ENCODE measurements at regions of chr2 and their contacts with region 1.

Region 1: DNA sequence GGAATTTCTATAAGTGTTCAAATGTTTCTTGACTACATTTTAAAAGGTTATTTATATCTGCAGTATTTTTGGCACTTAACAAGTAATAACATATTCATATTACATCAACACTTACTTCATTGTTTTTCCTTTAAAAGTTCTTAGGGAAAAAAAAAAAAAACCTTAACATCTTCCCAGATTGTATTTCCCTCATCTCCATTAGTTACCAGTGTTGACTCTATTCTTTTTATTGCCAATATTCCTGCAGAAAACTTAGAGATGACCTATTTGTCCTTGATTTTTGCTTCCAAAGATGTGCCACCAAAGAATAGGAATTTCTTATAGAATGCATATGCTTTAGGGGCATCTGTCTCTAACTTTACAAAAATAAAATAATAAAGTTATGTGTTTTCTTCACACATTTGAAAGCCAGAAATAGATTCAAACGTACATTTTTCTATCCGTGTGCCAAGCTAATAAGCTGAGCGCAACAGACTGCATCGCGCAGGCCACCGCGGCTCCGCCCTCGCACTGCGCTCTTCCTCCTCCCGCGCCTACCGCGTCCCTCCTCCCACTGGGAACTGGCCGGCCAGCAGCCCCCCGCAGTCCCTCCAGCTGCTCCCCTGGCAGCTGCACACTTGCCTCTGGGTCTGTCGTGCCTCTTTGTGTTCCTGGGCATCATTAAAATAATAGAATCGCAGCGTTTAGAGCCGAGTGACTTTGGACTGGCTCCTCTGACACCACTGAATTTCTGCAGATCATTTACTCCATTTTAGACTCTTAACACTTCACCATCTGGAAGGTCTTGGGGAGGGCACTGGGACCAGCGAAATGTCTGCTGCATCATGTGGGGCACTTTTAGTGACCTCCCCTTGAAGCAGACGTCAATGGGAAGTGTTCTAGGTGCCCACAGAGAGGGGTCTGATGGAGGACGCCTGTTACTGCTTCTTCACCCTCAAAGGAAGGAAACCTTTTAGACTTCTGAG is 21.2 kb upstream of the NAB1 start:
- DNase-seq: no peak
- ATAC-seq: peak; percentile 70
- H3K4me3 Mint-ChIP-seq: peak overlapping the region; percentile 87
- H3K27ac Mint-ChIP-seq: peak overlapping the region; percentile 42
- H3K4me1 Mint-ChIP-seq: peaks cover 8% of the 10 kb centered on the region
- H3K27me3 Mint-ChIP-seq: peaks cover 6% of the 10 kb centered on the region
- CTCF ChIP-seq: no peak

Region 2: GRCh38 chr2:190545555-190546385 is 82.0 kb before region 1 on chr2:
- CTCF ChIA-PET with region 1: no interaction called
- POLR2A ChIA-PET with region 1: no interaction called
- intact Hi-C with region 1: loop called (anchors 5 kb)
- DNase-seq: no peak
- ATAC-seq: no peak
- H3K4me3 Mint-ChIP-seq: no peak overlapping the region
- H3K27ac Mint-ChIP-seq: no peak overlapping the region
- H3K4me1 Mint-ChIP-seq: no peaks in the 10 kb centered on the region
- H3K27me3 Mint-ChIP-seq: no peaks in the 10 kb centered on the region
- CTCF ChIP-seq: no peak

Region 3: GRCh38 chr2:190583507-190584337 is 44.0 kb before region 1 on chr2:
- CTCF ChIA-PET with region 1: no interaction called
- POLR2A ChIA-PET with region 1: no interaction called
- intact Hi-C with region 1: loop called (anchors 5 kb)
- DNase-seq: no peak
- ATAC-seq: peak; percentile 72
- H3K4me3 Mint-ChIP-seq: peak overlapping the region; percentile 62
- H3K27ac Mint-ChIP-seq: peak overlapping the region; percentile 83
- H3K4me1 Mint-ChIP-seq: peaks cover 30% of the 10 kb centered on the region
- H3K27me3 Mint-ChIP-seq: no peaks in the 10 kb centered on the region
- CTCF ChIP-seq: no peak